A673 (cell line): ENCODE measurements at regions of chr12 and their contacts with region 1.

Region 1: DNA sequence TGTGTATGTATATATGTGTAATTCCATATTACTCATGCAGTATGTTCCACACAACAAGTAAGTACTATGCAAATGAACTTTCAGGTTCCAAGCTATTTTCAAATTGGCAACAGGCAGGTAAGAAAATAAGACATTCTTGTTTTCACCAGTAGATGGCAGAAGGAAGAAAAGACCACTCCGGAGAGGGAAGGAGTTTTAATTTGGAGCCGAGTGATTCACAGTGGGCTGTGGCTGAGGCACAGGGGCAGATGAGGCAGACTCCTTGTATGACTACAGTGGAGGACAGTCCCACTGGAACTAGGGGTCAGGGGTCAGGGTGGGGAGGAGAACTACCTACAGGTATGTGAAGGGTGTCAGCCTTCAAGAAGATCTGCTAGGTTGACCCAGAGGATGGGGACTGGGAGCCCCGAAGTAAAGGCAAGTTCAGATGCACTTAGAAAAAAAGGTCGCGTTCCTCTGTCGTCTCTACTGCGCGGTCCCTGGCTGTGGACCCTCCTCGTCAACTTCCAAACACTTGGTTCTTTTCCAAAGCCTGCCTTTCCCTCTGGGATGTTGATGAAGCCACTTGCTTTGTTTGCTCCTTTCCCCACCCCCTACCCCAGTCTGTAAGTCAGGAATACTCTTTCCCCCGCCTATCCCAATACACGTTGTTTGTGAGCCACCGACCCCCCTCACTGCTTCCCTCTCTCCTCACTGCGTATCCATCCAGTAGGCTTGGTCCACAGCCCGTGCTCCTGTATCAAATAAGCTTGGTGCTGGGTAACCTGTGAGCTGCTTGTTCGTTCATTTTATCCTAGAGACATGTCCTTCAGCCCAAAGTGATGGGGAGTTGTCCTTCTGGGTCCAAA is 24.1 kb downstream of the DDX47 start:
- DNase-seq: peak; percentile 70
- H3K4me3 ChIP-seq: no peak overlapping the region
- H3K27ac ChIP-seq: no peak overlapping the region
- H3K4me1 ChIP-seq: no peaks in the 10 kb centered on the region
- H3K27me3 ChIP-seq: no peaks in the 10 kb centered on the region
- CTCF ChIP-seq: peak; percentile 72

Region 2: DNA sequence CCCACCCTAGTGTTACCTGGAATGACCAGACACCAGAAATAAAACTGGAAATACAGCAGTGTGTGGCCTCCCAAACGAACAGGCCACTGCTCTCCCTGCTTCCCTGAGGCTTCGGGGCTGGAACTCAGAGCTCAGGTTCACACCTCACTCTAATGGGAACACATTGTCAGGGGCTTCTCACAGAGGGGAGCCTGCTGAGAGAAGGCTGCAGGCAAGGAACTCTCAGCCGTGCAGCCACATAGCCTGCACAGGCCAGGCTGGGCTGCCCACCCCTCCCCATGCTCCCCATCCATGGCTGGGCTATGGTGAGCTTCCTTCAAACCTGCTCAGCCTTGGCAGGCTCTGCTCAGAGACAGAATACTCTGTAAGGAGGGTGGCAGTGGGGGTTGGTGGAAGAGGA is 661.8 kb after region 1 on chr12:
- CTCF ChIA-PET with region 1: interaction called, 11 read pairs
- POLR2A ChIA-PET with region 1: no interaction called
- intact Hi-C with region 1: no loop called
- DNase-seq: no peak
- H3K4me3 ChIP-seq: no peak overlapping the region
- H3K27ac ChIP-seq: no peak overlapping the region
- H3K4me1 ChIP-seq: no peaks in the 10 kb centered on the region
- H3K27me3 ChIP-seq: no peaks in the 10 kb centered on the region
- CTCF ChIP-seq: no peak